ENCODE measurements at regions of chr1 and their contacts with region 1.

Region 1: DNA sequence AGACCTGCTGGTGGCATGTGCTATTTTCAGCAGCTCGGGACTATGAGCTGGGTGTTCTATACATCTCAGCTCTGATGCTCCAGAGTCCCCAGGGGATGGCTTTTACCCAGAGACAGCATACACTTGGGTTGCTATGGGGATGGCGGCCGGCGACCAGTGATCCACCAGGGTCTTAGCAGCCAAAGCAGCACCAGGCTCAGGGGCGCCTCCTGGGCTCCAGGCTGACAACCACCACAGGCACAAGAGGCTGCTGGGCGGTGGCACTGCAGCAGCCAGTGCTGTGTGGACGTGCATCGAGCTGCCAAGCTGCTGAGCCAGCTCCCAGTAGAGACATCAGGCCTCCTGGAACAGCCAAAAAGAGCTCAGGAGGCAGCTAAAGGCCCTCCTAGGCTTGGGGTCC is 37.6 kb upstream of the CLSTN1 start:
- DNase-seq: no peak
- H3K4me3 ChIP-seq: no peak overlapping the region
- H3K27ac ChIP-seq: no peak overlapping the region
- H3K4me1 ChIP-seq: peaks cover 0 to 9% (median 7%) of the 10 kb centered on the region in 4 experiments; a peak in 6 of 7 replicates
- H3K27me3 ChIP-seq: no peaks in the 10 kb centered on the region
- CTCF ChIP-seq: peak; percentile 47 to 53 (median 48)
- EP300 ChIP-seq: no peak
- POLR2A ChIP-seq: no peak
- RAD21 ChIP-seq: peak; percentile 45 to 64

Region 2: DNA sequence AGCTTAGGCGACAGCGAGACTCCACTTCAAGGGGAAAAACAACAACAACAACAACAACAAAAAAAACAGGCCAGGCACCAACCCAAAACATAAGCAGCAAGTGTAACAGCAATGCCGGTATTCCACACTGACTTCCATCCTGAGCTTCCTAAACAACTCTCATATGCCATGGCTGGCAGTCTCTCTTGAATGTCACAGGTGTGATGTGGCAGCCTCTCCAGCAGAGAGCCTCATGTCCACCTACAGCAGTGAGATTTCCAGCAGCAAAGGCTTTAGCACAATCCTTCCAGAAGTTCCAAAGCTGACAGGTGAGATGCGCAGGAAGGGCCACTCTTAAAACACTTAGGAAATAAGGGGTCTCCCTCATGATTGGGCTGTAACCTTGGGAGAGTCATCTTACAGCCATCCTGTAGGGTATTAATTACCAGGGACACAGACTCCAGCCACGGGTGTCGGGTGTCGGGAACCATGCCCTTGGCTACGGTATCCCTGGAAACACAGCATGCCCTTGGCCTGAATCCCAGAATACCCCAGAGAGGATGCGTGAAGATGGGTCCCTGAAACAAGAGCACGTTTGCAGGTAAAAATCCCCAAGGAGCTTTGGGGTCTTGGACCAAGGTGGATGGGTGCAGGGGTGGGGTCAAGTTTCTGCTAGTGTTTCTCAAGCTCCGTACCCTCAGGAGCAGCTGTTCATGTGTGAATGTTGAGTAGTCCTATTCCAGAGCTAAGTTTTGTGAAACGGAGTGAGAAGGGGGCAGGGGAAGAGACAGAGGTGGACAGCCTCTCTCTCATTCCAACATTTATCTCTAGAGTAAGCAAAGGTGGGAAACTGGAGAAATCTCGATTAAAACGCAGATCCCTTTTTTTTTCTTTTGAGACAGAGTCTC is 69.0 kb before region 1 on chr1:
- CTCF ChIA-PET with region 1: interaction called, 312 read pairs
- POLR2A ChIA-PET with region 1: interaction called, 3 read pairs
- DNase-seq: peak in 1 of 2 experiments; percentile 72
- H3K4me3 ChIP-seq: no peak overlapping the region
- H3K27ac ChIP-seq: no peak overlapping the region
- H3K4me1 ChIP-seq: peaks cover 3 to 23% (median 11%) of the 10 kb centered on the region in 4 experiments
- H3K27me3 ChIP-seq: no peaks in the 10 kb centered on the region
- CTCF ChIP-seq: peak; percentile 2 to 37 (median 5); a peak in 2 of 4 replicates
- EP300 ChIP-seq: no peak
- POLR2A ChIP-seq: no peak
- RAD21 ChIP-seq: peak in 1 of 2 experiments; percentile 27; a peak in 1 of 4 replicates

Region 3: DNA sequence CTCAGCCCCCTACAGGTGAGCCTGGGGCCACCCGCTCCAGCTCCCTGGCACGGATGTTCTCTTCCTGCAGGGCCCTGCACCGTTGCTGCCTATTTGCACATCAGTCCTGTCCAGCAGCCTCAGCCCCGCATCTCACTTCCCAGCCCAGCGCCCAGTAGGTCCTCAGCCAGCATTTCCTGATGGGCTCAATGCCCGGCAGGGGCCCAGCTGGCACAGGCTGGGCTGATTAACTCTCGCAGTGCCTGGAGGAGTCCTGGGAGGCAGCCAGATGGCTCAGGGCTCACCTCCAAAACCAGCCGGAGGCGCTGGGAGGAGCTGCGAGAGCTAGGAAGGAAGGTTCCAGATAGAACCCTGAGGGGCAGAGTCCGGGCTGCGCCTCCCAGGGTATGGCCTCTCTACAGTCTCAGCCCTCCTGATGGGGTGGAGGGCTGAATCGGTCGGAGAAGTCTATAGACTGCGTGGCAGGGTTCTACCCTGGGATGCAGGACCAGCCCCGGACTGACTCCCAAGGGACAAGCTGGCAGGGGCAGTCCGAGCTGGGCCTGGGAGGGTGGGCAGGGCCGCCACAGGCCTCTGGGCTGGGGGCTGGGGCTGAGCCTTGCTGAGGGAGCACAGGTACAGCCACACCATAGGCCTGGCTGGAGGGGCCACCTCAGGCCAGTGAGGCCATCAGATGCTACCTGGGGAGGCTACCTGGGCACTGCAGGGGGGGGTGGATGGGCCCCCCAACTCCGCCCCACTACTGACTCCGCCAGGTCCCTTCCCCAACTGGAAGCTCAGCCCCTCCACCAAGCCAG is 18.4 kb before region 1 on chr1:
- CTCF ChIA-PET with region 1: interaction called, 63 read pairs
- POLR2A ChIA-PET with region 1: interaction called, 3 read pairs
- DNase-seq: no peak
- H3K4me3 ChIP-seq: no peak overlapping the region
- H3K27ac ChIP-seq: no peak overlapping the region
- H3K4me1 ChIP-seq: peaks cover 0 to 22% (median 16%) of the 10 kb centered on the region in 4 experiments; a peak in 6 of 7 replicates
- H3K27me3 ChIP-seq: no peaks in the 10 kb centered on the region
- CTCF ChIP-seq: peak in 1 of 3 experiments; percentile 32; a peak in 1 of 4 replicates
- EP300 ChIP-seq: no peak
- POLR2A ChIP-seq: no peak
- RAD21 ChIP-seq: no peak

Measured in H1 (cell line).